ENCODE measurements at regions of chr2 and their contacts with region 1.

Region 1: DNA sequence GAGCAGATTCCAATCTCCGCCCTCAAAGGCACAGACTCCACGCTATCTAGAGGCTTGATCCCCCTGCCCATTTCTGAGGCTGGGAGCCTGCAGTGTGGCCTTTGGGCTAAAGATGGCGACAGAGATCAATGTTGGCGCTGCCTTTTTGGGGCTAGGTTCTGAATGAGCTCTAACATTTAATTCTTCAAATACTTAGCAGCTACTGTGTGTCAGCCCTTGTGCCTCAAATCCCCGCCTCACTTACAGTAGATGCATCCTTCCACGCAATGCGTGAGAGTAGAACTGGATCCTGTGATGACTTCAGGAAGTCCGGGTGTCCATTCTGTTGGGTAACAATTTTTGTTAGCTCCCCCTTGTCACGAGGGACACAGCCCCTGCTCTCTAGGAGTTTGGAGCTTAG is 12.4 kb downstream of the IL1F10 start:
- DNase-seq: peak in 1 of 2 experiments; percentile 63
- H3K4me3 ChIP-seq: peak overlapping the region; percentile 48; the same call in 1 of the 2 replicates
- H3K27ac ChIP-seq: peak overlapping the region; percentile 100
- H3K4me1 ChIP-seq: peaks cover 57% of the 10 kb centered on the region
- H3K27me3 ChIP-seq: no peaks in the 10 kb centered on the region
- CTCF ChIP-seq: peak; percentile 80

Region 2: DNA sequence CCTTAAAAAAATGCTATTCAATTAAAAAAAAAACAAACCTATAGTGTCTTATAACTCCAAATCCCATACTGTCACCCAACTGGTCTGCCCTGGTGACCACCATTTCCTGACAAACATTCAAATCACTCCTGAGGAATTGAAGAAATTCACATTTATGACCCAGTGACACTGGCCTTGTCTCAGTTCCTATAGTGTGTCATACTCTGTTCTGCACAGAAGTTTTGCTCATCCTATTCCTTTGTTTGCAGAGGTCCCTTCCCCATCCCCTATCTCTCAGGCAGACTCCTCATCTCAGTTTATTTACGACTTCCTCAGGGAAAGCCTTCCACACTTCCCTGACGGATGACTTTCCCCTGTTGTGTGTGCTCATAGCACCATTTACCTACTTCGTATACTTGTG is 790.0 kb before region 1 on chr2:
- CTCF ChIA-PET with region 1: no interaction called
- POLR2A ChIA-PET with region 1: no interaction called
- intact Hi-C with region 1: no loop called
- DNase-seq: no peak
- H3K4me3 ChIP-seq: no peak overlapping the region
- H3K27ac ChIP-seq: no peak overlapping the region
- H3K4me1 ChIP-seq: no peaks in the 10 kb centered on the region
- H3K27me3 ChIP-seq: no peaks in the 10 kb centered on the region
- CTCF ChIP-seq: no peak

Region 3: GRCh38 chr2:112764071-112765044 is 315.8 kb before region 1 on chr2 and contains the start of gene CKAP2L:
- CTCF ChIA-PET with region 1: no interaction called
- POLR2A ChIA-PET with region 1: no interaction called
- intact Hi-C with region 1: loop called (anchors 1 kb)
- DNase-seq: peak; percentile 94
- H3K4me3 ChIP-seq: peak within 1 kb of the TSS; percentile 77
- H3K27ac ChIP-seq: 0 out of 2 replicates have a peak within 1 kb of the TSS, but pooled peaks have one; percentile 25
- H3K4me1 ChIP-seq: peaks cover 29% of the 10 kb centered on the region
- H3K27me3 ChIP-seq: no peaks in the 10 kb centered on the region
- CTCF ChIP-seq: no peak
- total RNA-seq, gene CKAP2L: 17.7 and 28.7 TPM in 2 replicates

Region 4: GRCh38 chr2:112958428-112959108 is 121.6 kb before region 1 on chr2:
- CTCF ChIA-PET with region 1: interaction called, 4 read pairs
- POLR2A ChIA-PET with region 1: no interaction called
- intact Hi-C with region 1: loop called (anchors 1 kb)
- DNase-seq: peak in 1 of 2 experiments; percentile 40
- H3K4me3 ChIP-seq: no peak overlapping the region
- H3K27ac ChIP-seq: no peak overlapping the region
- H3K4me1 ChIP-seq: peaks cover 7% of the 10 kb centered on the region; the same call in 1 of the 2 replicates
- H3K27me3 ChIP-seq: no peaks in the 10 kb centered on the region
- CTCF ChIP-seq: peak; percentile 93

Region 5: DNA sequence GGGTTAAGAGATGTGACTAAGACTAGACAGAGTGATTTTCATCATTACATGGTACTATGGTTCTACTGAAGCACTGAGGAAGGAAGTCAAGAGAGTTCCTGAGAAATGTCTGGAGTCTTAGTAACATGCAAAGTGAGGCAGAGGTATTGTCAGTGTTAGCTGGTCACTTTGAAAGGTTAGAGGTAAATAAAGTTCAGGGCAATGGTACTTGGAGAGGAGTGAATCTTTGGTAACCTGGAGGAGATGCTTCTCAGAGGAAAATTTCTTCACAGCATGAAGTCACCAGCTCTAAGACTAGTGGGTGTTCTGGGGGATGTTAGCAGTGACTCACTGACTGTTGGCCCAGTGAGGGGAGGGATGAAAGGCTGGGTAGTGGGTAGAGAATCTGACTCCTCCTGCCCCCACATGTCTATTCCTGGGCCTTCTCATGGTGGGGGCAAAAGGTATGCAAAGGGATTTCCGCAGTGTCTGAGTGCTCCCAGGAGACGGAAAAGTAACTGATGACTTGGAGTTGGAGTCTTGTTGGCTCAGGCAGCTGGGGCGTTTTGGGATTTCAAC is 24.0 kb after region 1 on chr2:
- CTCF ChIA-PET with region 1: interaction called, 10 read pairs
- POLR2A ChIA-PET with region 1: no interaction called
- intact Hi-C with region 1: no loop called
- DNase-seq: no peak
- H3K4me3 ChIP-seq: no peak overlapping the region
- H3K27ac ChIP-seq: no peak overlapping the region
- H3K4me1 ChIP-seq: no peaks in the 10 kb centered on the region
- H3K27me3 ChIP-seq: no peaks in the 10 kb centered on the region
- CTCF ChIP-seq: no peak

Region 6: GRCh38 chr2:113240150-113240862 is 160.2 kb after region 1 on chr2:
- CTCF ChIA-PET with region 1: interaction called, 6 read pairs
- POLR2A ChIA-PET with region 1: no interaction called
- intact Hi-C with region 1: loop called (anchors 2 kb)
- DNase-seq: peak; percentile 68 to 82
- H3K4me3 ChIP-seq: peak overlapping the region; percentile 16; the same call in 1 of the 2 replicates
- H3K27ac ChIP-seq: peak overlapping the region; percentile 80
- H3K4me1 ChIP-seq: peaks cover 49% of the 10 kb centered on the region
- H3K27me3 ChIP-seq: no peaks in the 10 kb centered on the region
- CTCF ChIP-seq: no peak

Region 7: GRCh38 chr2:113282747-113283533 is 202.8 kb after region 1 on chr2:
- CTCF ChIA-PET with region 1: no interaction called
- POLR2A ChIA-PET with region 1: no interaction called
- intact Hi-C with region 1: loop called (anchors 1 kb)
- DNase-seq: peak; percentile 62 to 79
- H3K4me3 ChIP-seq: no peak overlapping the region
- H3K27ac ChIP-seq: peak overlapping the region; percentile 99
- H3K4me1 ChIP-seq: peaks cover 65% of the 10 kb centered on the region
- H3K27me3 ChIP-seq: no peaks in the 10 kb centered on the region
- CTCF ChIP-seq: peak; percentile 54; the same call in 1 of the 2 replicates